PC-9 (cell line): ENCODE measurements at regions of chr4 and their contacts with region 1.

Region 1: DNA sequence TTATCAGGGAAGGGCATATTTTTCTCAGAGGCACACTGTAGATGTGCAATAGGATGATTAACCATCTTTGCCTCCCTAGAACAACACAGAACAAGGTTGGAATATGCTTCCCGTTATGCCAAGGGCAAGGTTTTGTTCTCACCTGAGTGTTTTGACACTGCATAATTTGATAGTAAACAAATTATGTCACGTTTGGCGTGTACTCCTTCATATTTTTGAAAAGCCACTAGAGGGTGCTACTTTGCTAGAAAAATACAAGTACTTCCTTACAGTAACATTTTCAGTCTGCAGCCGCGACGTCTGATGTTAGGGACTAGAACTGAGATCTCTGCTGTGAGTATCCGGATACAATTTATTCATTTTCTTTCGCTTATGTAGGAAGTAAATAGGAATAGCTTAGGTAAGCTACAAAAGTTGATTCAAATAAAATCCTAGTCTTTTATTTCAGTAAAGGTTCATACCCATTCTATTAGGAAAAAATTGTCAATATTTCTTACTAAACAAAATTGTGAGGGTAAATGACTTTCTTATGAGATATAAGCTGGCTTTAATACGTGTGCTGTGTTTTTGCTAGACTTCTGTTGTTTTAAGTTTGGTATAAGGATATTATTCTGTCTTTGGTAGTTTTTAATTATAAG is 181.1 kb upstream of the WDFY3 start:
- DNase-seq: peak; percentile 10 to 59
- H3K4me3 ChIP-seq: no peak overlapping the region
- H3K27ac ChIP-seq: no peak overlapping the region
- H3K4me1 ChIP-seq: no peaks in the 10 kb centered on the region
- H3K27me3 ChIP-seq: no peaks in the 10 kb centered on the region
- CTCF ChIP-seq: peak; percentile 72

Region 2: DNA sequence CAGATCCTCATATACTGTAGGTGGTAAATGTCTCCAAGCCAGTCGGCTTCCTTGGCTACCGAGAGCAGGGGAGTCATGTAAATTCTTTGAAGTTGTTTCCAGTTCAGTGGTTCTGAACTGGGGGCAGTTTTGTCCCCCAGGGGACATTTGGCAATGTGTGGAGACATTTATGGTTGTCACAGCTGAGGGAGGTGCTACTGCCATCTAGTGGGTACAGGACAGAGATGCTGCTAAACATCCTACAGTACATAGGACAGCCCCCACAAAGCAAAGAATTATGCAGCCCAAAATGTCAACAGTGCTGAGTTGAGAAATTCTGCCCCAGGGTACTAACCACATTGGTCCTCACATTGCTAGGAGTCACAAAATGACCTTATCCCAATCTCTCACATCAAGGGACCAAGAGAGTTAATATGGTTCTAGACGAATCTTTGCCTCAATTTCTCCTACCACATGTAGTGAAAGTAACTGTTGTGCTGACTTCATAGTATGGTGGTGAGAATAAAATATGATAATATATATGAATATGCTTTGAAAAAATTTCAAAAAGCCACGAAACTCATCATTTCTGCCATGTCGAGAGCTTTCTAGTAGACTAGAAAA is 223.0 kb after region 1 on chr4:
- CTCF ChIA-PET with region 1: interaction called, 4 read pairs
- POLR2A ChIA-PET with region 1: no interaction called
- intact Hi-C with region 1: loop called (anchors 2 kb)
- DNase-seq: peak in 1 of 2 experiments; percentile 19
- H3K4me3 ChIP-seq: no peak overlapping the region
- H3K27ac ChIP-seq: no peak overlapping the region
- H3K4me1 ChIP-seq: no peaks in the 10 kb centered on the region
- H3K27me3 ChIP-seq: no peaks in the 10 kb centered on the region
- CTCF ChIP-seq: peak; percentile 77